Activated CD4-positive, alpha-beta T cell treated with anti-CD3 and anti-CD28 coated beads, Interleukin-2, amount 10 ng/mL, durations not matched to agents 24 days and 14 days (primary cell): ENCODE measurements at regions of chr1 and their contacts with region 1.

Region 1: DNA sequence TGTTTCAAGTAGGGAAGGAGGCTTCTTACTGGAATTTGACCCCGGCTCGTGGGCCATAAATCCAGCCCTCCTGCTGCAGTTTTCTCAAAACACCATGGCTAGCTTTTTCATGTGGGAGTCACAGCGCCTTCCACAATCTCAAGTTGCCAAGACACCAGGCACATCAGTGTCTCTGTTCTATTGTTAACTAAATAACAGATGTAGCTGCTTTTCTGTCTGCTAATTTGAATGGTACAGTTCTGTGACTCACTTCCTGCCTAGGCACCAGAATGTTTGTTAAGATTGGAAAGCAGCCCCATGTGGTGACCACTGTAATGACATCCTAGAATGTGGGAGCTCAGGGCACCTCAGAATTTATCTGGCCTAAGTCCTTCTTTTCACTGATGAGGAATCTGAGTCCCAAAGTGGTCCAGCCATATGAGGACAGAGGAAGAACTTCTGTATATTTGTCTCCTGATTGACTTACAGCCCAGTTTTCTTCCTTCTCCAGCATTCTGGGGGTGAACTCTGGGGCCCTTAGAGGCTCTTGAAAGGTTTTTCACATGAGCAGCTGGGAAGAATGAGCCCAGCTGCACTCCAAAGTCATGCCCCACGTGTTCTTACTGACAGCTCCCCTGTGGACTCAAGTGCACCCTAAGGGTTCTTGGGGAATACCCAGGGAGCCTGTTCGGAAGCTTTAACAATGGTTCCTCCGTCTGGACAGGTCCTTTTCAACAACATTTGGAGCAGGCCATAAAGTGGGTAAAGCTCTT is 27.5 kb downstream of the TRIM45 start:
- DNase-seq: peak; percentile 83
- H3K4me3 Mint-ChIP-seq: no peak overlapping the region
- H3K27ac Mint-ChIP-seq: peak overlapping the region; percentile 64
- H3K4me1 Mint-ChIP-seq: peaks cover 20% of the 10 kb centered on the region
- H3K27me3 Mint-ChIP-seq: no peaks in the 10 kb centered on the region

Region 2: DNA sequence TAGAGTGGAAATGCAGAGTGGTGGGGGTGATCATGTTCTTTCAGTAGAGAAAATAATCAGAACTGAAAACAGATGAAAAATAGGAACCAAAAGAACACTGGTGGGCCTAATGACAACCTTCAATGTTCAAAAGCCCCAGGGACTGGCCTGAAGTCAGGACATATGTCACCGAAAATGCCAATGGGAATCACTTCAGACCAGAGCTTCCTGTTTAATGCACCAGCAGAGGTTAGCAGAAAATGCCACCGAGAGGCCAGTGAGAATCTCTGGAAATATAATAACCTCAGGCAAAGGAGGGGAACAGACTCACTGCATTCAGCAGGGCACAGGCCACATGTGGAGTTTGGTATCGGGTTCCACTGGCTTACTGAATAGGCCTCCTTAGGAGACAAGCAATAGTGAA is 507.3 kb before region 1 on chr1:
- intact Hi-C with region 1: no loop called
- DNase-seq: no peak
- H3K4me3 Mint-ChIP-seq: no peak overlapping the region
- H3K27ac Mint-ChIP-seq: no peak overlapping the region
- H3K4me1 Mint-ChIP-seq: peaks cover 9% of the 10 kb centered on the region
- H3K27me3 Mint-ChIP-seq: no peaks in the 10 kb centered on the region

Region 3: DNA sequence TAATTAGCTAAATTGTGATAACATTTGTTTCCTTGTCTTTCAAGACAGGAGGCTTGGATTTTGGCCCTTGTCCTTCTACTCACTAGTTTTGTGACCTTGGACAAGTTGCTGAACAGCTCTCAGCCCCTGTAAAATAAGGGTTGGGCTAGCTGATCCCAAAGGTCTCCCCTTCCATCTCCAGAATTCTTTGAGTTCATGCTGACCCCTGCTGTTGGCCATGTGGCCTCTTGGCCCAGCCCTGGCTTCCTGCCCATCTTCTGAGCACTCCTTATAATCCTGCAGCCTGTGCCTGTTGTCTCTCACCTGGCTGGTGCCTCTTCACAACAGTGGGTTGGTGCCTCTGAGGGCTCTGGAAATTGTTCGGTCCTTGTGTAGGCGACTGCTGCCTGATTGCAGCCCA is 174.2 kb before region 1 on chr1:
- intact Hi-C with region 1: no loop called
- DNase-seq: no peak
- H3K4me3 Mint-ChIP-seq: no peak overlapping the region
- H3K27ac Mint-ChIP-seq: peak overlapping the region; percentile 56
- H3K4me1 Mint-ChIP-seq: peaks cover 14% of the 10 kb centered on the region
- H3K27me3 Mint-ChIP-seq: no peaks in the 10 kb centered on the region

Region 4: DNA sequence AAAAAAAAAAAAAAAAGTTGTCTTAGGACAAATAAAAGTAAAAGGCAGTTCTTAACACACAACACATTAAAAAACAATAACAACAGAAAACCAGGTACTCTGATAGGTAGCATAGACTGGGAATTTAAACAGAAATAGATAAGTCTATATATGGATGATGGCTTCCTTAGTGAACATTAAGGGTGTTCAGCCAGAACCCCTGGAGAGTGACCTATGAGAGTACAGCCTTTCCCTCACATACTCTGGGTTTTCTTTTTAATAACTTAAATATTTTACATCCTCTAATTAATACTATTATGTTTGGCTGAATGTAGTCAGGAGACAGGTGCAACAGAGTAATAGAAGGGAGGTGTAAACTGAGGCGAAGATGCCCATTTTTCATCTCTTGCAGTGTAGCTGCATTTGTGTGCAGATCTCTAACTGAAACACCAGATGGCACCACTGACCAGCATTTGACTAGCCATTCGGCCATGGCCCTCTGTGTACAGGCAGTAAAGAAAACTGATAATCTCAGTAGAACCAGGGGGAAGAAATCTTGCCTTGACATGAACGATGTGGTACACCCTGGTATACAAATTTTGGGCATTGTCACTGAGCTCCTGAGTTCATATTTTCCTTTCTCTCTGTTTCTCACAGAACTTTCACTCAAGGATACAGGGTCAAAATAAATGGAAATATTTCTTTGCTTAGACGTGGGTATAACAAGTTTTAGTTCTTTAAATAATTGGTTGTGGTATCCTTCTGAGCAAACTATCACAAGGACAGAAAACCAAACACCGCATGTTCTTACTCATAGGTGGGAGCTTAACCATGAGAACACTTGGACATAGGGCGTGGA is 26.3 kb before region 1 on chr1:
- intact Hi-C with region 1: loop called (anchors 1 kb)
- DNase-seq: peak; percentile 79
- H3K4me3 Mint-ChIP-seq: no peak overlapping the region
- H3K27ac Mint-ChIP-seq: no peak overlapping the region
- H3K4me1 Mint-ChIP-seq: peaks cover 35% of the 10 kb centered on the region
- H3K27me3 Mint-ChIP-seq: no peaks in the 10 kb centered on the region

Region 5: DNA sequence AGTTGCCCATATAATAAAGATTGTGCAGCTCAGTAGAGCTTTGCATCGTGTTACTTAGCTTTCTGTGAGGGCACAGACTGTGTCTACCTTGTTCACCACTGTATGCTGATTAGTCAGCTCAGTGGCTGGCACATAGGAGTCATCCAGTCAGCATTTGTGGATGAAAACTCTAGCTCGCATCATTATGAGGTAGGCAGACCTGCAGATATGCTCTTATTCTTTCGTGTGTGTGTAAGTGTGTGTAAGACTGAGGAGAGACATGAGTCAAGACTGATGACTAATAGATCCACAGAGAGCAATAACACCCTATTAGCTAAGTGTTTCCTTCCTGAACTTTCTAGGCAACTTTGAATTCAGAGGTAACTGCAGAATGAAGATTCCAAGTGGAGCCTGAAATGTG is 16.8 kb before region 1 on chr1:
- intact Hi-C with region 1: loop called (anchors 2 kb)
- DNase-seq: no peak
- H3K4me3 Mint-ChIP-seq: no peak overlapping the region
- H3K27ac Mint-ChIP-seq: peak overlapping the region; percentile 91
- H3K4me1 Mint-ChIP-seq: peaks cover 17% of the 10 kb centered on the region
- H3K27me3 Mint-ChIP-seq: no peaks in the 10 kb centered on the region